G401 (cell line): ENCODE measurements at regions of chr10 and their contacts with region 1.

Region 1: GRCh38 chr10:132582771-132583170 is 45.2 kb downstream of the INPP5A start:
- DNase-seq: peak; percentile 65

Region 2: DNA sequence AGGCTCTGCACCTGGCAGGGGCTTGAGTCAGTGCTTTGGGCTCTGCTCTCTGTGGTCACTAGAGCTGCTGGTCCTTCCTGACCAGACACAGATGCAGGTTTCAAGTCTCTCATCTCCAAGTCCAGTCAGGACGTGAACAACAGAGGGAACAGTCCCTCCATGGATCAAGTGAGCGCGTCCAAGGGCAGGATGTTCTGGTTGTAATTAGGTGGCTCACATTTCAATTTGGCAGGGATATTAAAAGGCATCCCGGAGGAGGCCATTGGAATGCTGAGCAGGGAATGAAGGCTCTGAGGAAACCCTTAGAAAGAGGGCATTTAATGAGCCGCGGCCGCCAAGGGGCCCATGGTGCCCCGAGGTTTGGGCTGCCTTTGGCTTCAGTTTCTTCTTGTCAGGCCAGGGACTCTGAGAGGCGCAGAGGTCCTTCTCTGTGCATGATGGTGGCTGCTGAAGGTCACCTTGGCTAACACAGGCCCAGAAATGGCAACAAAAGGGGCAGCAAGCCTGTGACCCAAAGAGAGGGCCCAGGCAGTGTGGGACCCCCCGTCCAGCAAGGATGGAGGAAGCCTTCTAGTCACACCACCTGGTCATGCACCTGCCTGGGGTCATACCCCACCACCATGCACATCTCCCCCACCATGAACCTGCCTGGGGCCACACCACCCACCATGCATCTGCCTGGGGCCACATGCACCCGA is 75.9 kb before region 1 on chr10:
- in situ Hi-C with region 1: no loop called
- DNase-seq: peak; percentile 95

Region 3: DNA sequence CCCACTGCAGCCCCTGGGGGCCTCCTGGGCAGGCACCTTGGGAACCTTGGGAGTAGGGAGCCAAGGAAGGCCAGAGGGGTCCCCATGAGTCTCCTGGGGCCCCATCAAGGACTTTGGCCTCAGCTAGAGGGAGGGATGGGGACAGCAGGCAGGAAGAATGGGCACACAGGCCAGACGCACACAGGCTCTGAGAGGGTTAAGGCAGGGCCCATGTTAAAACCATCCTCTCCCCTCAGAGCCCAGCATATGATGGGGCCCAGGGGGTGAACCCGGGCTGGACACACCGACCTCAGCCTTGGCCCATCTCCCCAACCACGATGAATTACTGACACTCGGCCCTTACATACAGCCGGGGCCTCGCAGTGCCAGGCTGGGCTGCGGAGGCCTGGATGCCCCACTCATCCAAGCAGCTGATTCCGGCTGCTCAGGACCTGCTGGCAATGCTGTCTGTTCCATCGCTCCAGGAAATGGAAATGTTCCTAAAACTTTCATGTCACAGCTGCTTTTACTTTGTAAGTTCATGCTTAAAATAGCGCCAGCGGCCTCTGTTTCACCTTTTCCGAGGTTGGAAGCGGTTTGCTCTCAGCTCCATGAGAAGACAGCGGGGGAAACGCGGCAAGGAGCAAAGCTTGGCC is 62.5 kb before region 1 on chr10:
- in situ Hi-C with region 1: loop called (anchors 5 kb)
- DNase-seq: no peak

Region 4: DNA sequence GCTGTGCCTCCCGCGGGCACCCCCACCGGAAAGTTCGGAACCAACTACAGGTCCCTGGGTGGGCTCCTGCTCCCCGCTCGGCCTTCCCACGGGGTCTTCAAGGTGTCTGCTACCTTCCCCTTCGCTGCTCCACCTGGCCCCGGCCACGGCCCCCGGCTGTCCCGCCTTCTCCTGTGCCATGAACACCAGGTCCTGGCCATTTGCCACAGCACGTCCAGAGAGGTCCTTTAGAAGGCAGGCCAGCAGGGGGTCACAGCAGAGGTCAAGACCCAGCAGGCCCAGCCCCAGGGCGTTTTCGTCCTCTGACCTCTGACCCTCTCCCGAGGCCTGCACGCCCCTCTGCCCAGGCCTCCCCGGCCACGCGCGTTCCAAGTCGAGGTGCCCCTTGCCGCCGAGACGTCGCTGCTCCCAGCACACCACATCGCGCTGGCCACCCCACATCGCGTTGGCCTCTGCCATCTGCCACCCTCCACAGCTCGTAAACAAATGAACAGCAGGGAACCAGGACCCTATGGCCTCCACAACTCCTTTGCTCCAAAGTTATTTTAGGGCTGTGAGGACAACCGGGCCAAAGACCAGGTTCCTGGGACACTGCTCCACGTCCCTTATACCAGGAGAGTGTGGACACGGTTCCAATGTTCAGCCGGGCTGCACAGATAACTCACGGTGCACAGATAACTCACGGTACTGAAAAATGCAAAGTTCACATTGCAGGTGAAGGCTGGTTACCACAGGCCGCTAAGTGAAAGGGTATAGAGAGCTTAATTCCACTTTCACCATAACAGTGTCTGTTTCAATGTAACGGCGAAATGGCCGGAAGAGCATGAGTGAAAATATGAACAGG is 285.3 kb after region 1 on chr10:
- in situ Hi-C with region 1: no loop called
- DNase-seq: no peak